Activated CD8-positive, alpha-beta T cell treated with anti-CD3 and anti-CD28 coated beads, Interleukin-2, amount 10 ng/mL, durations not matched to agents 7 days and 5 days (primary cell): ENCODE measurements at regions of chr1 and their contacts with region 1.

Region 1: DNA sequence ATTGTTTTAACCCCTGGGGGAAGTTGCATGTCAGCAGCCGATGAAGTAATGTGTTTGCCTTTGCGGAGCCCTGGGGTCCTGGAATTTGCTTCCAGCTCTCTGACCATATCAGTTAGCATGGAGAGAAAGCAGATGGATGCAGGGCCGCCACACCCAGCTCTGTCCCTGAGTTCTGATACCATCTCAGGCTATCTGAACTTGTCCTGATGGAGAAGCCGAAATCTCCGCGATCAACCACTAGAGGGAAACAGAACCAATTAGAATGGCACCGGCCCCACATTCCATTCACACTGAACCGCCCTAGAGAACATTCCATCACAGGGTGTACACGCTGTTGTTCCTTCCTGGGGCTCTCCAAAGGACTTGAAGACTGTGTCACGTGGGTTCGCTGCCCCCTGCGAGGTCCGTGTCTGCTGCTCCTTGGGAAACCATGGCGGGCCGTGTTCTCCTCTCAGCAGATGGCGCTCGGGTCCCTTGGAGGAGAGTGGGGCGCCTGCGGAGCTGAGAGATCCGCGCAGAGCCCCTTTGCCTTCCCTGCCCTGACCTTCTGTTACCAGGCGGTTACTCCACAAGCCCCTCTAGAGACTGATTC is 75.4 kb downstream of the ABCA4 start:
- DNase-seq: peak; percentile 54
- ATAC-seq: peak; percentile 68
- H3K4me3 Mint-ChIP-seq: peak overlapping the region; percentile 32
- H3K27ac Mint-ChIP-seq: no peak overlapping the region
- H3K4me1 Mint-ChIP-seq: peaks cover 5% of the 10 kb centered on the region
- H3K27me3 Mint-ChIP-seq: peaks cover 10% of the 10 kb centered on the region

Region 2: DNA sequence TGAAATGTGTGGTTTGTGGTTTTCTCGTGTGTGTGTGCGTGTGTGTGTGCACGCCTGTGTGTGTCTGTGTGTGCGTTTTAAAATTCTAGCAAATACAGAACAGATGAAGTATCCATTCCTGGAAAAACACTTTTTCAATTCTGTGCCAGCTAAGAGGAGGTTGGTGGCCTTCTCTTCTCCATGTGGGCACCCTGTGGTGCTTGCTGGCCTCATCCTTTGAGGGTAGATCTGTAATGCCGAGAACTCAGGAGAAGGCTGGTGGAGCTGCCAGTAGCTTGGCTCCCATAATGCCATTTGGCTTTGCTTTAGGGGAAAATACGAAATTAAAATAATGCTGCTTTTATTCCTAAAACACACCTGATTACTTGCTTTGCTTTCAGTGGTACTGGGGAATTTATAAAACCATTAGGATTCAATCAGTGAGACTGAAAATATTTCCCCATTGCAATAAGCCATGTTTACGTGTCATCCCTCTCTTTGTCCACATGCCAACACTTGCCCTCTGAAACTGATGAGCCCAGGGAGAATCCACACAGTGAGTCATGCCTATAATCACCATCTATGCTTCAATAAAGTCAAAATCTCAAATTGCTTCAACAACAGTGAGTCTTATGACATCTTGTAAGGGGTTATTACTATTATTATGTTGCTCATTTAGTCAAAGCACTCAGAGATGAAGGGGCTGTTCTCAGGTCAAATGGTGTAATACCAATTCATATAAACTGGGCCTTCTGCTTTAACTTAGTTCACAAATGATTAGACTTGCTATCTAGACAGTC is 36.2 kb after region 1 on chr1:
- CTCF ChIA-PET with region 1: interaction called, 10 read pairs
- POLR2A ChIA-PET with region 1: no interaction called
- DNase-seq: no peak
- ATAC-seq: no peak
- H3K4me3 Mint-ChIP-seq: no peak overlapping the region
- H3K27ac Mint-ChIP-seq: no peak overlapping the region
- H3K4me1 Mint-ChIP-seq: peaks cover 11% of the 10 kb centered on the region
- H3K27me3 Mint-ChIP-seq: peaks cover 28% of the 10 kb centered on the region

Region 3: GRCh38 chr1:94329986-94330385 is 284.4 kb after region 1 on chr1:
- CTCF ChIA-PET with region 1: interaction called, 41 read pairs
- POLR2A ChIA-PET with region 1: no interaction called
- DNase-seq: no peak
- ATAC-seq: no peak
- H3K4me3 Mint-ChIP-seq: no peak overlapping the region
- H3K27ac Mint-ChIP-seq: no peak overlapping the region
- H3K4me1 Mint-ChIP-seq: peaks cover 7% of the 10 kb centered on the region
- H3K27me3 Mint-ChIP-seq: peaks cover 25% of the 10 kb centered on the region

Region 4: GRCh38 chr1:94335950-94336349 is 290.4 kb after region 1 on chr1:
- CTCF ChIA-PET with region 1: interaction called, 41 read pairs
- POLR2A ChIA-PET with region 1: no interaction called
- DNase-seq: peak; percentile 50
- ATAC-seq: no peak
- H3K4me3 Mint-ChIP-seq: no peak overlapping the region
- H3K27ac Mint-ChIP-seq: no peak overlapping the region
- H3K4me1 Mint-ChIP-seq: no peaks in the 10 kb centered on the region
- H3K27me3 Mint-ChIP-seq: peaks cover 9% of the 10 kb centered on the region

Region 5: DNA sequence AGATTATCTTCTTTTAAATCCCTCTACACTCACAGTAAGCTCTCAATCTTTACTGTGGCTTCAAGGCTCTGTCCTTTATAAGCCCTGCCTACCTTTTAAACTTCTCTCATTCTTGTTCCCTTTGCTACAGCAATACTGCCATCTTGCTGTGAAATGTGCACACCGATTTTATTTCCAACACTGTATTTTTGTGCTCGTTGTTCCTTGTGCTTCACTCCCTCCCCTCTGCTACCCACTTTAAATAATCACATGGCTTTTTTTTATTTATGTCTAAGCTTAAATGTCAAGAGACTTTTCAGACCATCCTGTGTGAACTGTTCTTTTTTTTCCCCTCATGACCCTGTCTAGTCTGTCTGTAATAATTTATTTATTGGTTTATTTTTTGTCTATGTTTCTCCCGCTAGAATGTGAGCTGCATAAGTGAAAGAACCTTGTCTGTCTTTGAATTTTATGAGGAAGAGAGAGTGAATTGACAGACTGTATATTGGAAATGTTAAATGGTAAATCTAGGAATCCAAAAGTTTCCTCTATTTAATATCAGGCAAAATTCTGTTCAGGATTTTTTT is 418.3 kb after region 1 on chr1:
- CTCF ChIA-PET with region 1: interaction called, 23 read pairs
- POLR2A ChIA-PET with region 1: no interaction called
- DNase-seq: peak; percentile 25
- ATAC-seq: peak; percentile 44
- H3K4me3 Mint-ChIP-seq: no peak overlapping the region
- H3K27ac Mint-ChIP-seq: no peak overlapping the region
- H3K4me1 Mint-ChIP-seq: no peaks in the 10 kb centered on the region
- H3K27me3 Mint-ChIP-seq: no peaks in the 10 kb centered on the region